ENCODE measurements at regions of chr10 and their contacts with region 1.

Region 1: DNA sequence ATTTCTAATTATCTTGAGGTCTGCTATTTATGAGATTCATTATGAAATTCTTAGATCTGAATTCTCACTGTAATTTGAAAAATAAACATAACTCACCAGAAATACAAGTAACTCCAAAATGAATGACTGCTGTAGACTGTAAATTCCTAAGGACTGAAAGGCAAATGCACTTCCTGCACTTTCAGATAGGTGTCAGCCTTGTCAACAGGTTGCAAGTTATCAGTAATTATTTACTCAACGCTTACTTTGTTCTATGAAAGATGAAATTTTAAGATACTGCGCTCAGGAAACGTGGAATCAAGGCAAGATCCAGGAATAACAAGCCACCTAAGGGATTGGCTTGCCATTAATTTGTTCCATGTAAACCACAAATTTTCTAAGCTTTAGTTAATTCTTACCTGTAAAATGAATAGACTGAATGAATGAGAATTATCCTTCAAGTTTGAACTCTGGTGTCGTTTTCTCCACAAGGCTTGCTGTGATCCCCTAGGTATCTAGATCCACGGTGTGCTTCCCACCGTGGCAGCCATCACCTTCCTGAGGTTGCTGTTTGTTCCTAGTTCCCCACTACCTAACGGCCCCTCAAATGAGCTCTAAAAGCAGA is 12.6 kb downstream of the DHX32 start:
- DNase-seq: peak in 1 of 2 donors; percentile 55
- ATAC-seq: peak in 1 of 3 donors; percentile 67
- H3K4me3 ChIP-seq: no peak overlapping the region
- H3K4me3 Mint-ChIP-seq: no peak overlapping the region
- H3K27ac ChIP-seq: no peak overlapping the region
- H3K27ac Mint-ChIP-seq: no peak overlapping the region
- H3K4me1 ChIP-seq: no peaks in the 10 kb centered on the region
- H3K4me1 Mint-ChIP-seq: no peaks in the 10 kb centered on the region
- H3K27me3 ChIP-seq: no peaks in the 10 kb centered on the region
- H3K27me3 Mint-ChIP-seq: no peaks in the 10 kb centered on the region
- CTCF ChIP-seq: peak; percentile 76

Region 2: DNA sequence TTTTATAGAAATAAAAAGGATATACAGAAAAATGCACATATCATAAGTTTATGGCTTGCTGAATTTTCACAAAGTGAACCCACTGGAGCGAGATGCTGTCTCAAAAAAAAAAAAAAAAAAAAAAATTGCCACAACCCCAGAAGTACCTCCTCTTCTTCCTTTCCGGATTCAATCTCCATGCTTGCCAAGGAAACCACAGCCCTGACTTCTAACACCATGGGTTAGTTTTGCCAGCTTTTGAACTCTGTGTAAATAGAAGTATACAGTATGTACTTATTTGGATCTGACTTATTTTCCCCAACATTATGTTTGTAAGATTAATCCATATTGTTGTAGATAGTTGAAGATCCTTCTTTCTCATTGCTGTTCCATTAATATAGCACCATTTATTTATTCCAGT is 67.9 kb after region 1 on chr10:
- intact Hi-C with region 1: no loop called
- DNase-seq: no peak
- ATAC-seq: no peak
- H3K4me3 ChIP-seq: no peak overlapping the region
- H3K4me3 Mint-ChIP-seq: no peak overlapping the region
- H3K27ac ChIP-seq: no peak overlapping the region
- H3K27ac Mint-ChIP-seq: no peak overlapping the region
- H3K4me1 ChIP-seq: no peaks in the 10 kb centered on the region
- H3K4me1 Mint-ChIP-seq: no peaks in the 10 kb centered on the region
- H3K27me3 ChIP-seq: no peaks in the 10 kb centered on the region
- H3K27me3 Mint-ChIP-seq: peaks cover 27 to 49% of the 10 kb centered on the region in 2 donors
- CTCF ChIP-seq: no peak

Region 3: GRCh38 chr10:126749015-126749655 is 880.7 kb after region 1 on chr10:
- intact Hi-C with region 1: loop called (anchors 5 kb)
- DNase-seq: peak; percentile 44 to 52
- ATAC-seq: peak; percentile 62 to 89 (median 65)
- H3K4me3 ChIP-seq: no peak overlapping the region
- H3K4me3 Mint-ChIP-seq: no peak overlapping the region
- H3K27ac ChIP-seq: no peak overlapping the region
- H3K27ac Mint-ChIP-seq: no peak overlapping the region
- H3K4me1 ChIP-seq: no peaks in the 10 kb centered on the region
- H3K4me1 Mint-ChIP-seq: no peaks in the 10 kb centered on the region
- H3K27me3 ChIP-seq: no peaks in the 10 kb centered on the region
- H3K27me3 Mint-ChIP-seq: no peaks in the 10 kb centered on the region
- CTCF ChIP-seq: peak; percentile 60